Aorta (tissue), 5 donors: ENCODE measurements at regions of chr4 and their contacts with region 1.

Region 1: DNA sequence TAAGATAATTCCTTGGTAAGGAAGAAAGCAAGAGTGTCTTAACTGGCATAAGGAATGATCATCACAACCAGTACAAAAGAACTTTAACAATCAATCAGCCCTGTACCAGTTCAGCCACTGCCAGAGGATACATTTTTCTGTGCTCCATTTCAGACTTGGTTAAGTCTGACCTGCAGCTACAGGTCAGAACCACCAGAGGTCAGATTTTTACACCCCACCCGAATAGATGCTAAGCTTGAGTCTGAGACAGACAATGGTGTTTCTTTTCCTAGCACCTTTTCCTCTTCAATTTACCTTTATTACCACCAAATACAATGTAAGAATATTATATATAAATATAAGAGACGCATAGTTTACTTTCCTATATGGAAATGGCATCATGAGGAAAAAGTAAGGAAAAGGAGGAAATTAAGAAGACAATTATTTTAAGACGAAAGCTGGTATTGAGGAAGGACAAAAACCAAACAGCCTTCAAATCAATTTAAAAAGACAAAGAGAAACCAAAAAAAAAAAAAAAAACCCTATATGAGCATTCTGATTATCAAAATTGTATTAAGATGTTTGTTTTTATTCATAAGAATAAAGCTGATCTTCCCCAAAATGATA is 215.3 kb upstream of the TTC29 start:
- DNase-seq: no peak
- ATAC-seq: peak; percentile 76
- H3K4me3 ChIP-seq: no peak overlapping the region
- H3K27ac ChIP-seq: no peak overlapping the region
- H3K4me1 ChIP-seq: no peaks in the 10 kb centered on the region
- H3K27me3 ChIP-seq: no peaks in the 10 kb centered on the region

Region 2: GRCh38 chr4:147220833-147221232 is 59.8 kb after region 1 on chr4:
- intact Hi-C with region 1: loop called in 1 of 2 experiments (anchors 10 kb)
- DNase-seq: no peak
- ATAC-seq: no peak
- H3K4me3 ChIP-seq: no peak overlapping the region
- H3K27ac ChIP-seq: no peak overlapping the region
- H3K4me1 ChIP-seq: no peaks in the 10 kb centered on the region
- H3K27me3 ChIP-seq: no peaks in the 10 kb centered on the region

Region 3: DNA sequence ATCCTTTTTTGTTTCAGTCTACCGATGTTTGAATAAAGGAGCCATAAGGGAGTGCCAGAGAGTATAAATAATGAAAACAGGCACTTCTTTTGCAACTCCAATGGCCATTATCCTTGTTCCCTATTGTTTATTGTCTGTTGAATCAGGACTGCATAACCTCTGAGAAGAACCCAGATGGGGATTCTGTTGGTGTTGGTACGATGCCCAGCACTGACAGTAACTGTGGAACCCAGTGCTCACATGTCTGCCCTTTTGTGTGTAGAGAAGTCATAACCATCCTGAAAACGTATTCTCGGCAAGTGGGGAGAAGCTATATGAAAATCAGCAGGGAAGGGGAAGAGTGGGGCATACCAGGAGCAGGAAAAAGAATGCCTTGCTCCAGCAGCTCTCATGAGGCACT is 124.7 kb after region 1 on chr4:
- intact Hi-C with region 1: no loop called
- DNase-seq: no peak
- ATAC-seq: no peak
- H3K4me3 ChIP-seq: no peak overlapping the region
- H3K27ac ChIP-seq: no peak overlapping the region
- H3K4me1 ChIP-seq: no peaks in the 10 kb centered on the region
- H3K27me3 ChIP-seq: no peaks in the 10 kb centered on the region

Region 4: GRCh38 chr4:147334478-147334877 is 173.5 kb after region 1 on chr4:
- intact Hi-C with region 1: no loop called
- DNase-seq: no peak
- ATAC-seq: no peak
- H3K4me3 ChIP-seq: no peak overlapping the region
- H3K27ac ChIP-seq: no peak overlapping the region
- H3K4me1 ChIP-seq: no peaks in the 10 kb centered on the region
- H3K27me3 ChIP-seq: no peaks in the 10 kb centered on the region

Region 5: GRCh38 chr4:147518846-147519767 is 358.1 kb after region 1 on chr4:
- intact Hi-C with region 1: loop called in 1 of 2 experiments (anchors 5 kb)
- DNase-seq: peak in 1 of 2 donors; percentile 63
- ATAC-seq: peak; percentile 74
- H3K4me3 ChIP-seq: no peak overlapping the region
- H3K27ac ChIP-seq: no peak overlapping the region
- H3K4me1 ChIP-seq: peaks cover 3 to 8% of the 10 kb centered on the region in 2 donors
- H3K27me3 ChIP-seq: no peaks in the 10 kb centered on the region